ENCODE measurements at regions of chr2 and their contacts with region 1.

Region 1: DNA sequence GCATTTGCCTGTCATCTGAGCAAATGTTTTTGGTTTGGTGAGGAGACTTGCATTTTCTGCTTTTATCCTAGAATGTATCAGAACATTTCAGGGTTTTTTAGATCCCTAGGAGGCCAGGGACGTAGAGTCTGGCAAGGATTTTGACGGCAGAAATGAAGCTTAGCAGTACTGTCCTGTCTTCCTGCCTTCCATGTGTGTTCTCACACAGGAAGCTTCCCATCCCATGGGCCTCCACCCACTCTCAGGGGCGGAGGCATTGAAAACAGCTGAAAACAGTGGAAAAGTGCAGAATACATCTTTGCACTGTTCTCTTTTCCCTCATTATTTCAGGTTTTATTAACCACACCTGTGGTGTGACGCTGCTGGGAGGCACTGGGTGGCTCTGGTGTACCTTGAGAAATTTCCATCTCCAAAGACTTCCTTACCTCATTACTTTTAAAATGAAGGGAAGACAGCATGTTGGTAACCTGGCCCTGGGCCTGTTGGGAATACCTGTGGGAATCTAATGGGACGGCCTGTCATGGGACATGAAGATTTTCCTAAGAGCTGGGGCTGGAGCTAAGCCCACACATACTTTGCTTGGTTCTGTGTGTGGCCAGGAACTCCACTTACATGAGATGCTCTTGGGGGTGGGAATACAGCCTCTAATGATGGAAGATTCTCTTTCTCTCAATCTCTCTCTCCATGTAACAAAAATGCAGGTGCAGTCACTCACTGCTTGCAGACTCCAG is 20.5 kb downstream of the PCARE start:
- DNase-seq: peak; percentile 44
- H3K4me3 Mint-ChIP-seq: no peak overlapping the region
- H3K27ac Mint-ChIP-seq: no peak overlapping the region
- H3K4me1 Mint-ChIP-seq: peaks cover 18% of the 10 kb centered on the region
- H3K27me3 Mint-ChIP-seq: no peaks in the 10 kb centered on the region
- CTCF ChIP-seq: peak; percentile 52

Region 2: GRCh38 chr2:29042561-29043075 is 11.2 kb before region 1 on chr2:
- CTCF ChIA-PET with region 1: interaction called, 16 read pairs
- POLR2A ChIA-PET with region 1: interaction called, 3 read pairs
- intact Hi-C with region 1: no loop called
- DNase-seq: no peak
- H3K4me3 Mint-ChIP-seq: no peak overlapping the region
- H3K27ac Mint-ChIP-seq: no peak overlapping the region
- H3K4me1 Mint-ChIP-seq: no peaks in the 10 kb centered on the region
- H3K27me3 Mint-ChIP-seq: no peaks in the 10 kb centered on the region
- CTCF ChIP-seq: no peak

Region 3: GRCh38 chr2:29130295-29130694 is 76.5 kb after region 1 on chr2:
- CTCF ChIA-PET with region 1: interaction called, 15 read pairs
- POLR2A ChIA-PET with region 1: no interaction called
- intact Hi-C with region 1: loop called (anchors 2 kb)
- DNase-seq: peak; percentile 93
- H3K4me3 Mint-ChIP-seq: peak overlapping the region; percentile 46
- H3K27ac Mint-ChIP-seq: peak overlapping the region; percentile 63
- H3K4me1 Mint-ChIP-seq: peaks cover 25% of the 10 kb centered on the region
- H3K27me3 Mint-ChIP-seq: no peaks in the 10 kb centered on the region
- CTCF ChIP-seq: no peak

Region 4: GRCh38 chr2:29196792-29197788 is 143.3 kb after region 1 on chr2:
- CTCF ChIA-PET with region 1: interaction called, 10 read pairs
- POLR2A ChIA-PET with region 1: no interaction called
- intact Hi-C with region 1: loop called (anchors 1 kb)
- DNase-seq: peak; percentile 77
- H3K4me3 Mint-ChIP-seq: no peak overlapping the region
- H3K27ac Mint-ChIP-seq: no peak overlapping the region
- H3K4me1 Mint-ChIP-seq: peaks cover 11% of the 10 kb centered on the region
- H3K27me3 Mint-ChIP-seq: no peaks in the 10 kb centered on the region
- CTCF ChIP-seq: peak; percentile 84

Measured in MCF 10A (cell line).